BJ (cell line): ENCODE measurements at regions of chr11 and their contacts with region 1.

Region 1: DNA sequence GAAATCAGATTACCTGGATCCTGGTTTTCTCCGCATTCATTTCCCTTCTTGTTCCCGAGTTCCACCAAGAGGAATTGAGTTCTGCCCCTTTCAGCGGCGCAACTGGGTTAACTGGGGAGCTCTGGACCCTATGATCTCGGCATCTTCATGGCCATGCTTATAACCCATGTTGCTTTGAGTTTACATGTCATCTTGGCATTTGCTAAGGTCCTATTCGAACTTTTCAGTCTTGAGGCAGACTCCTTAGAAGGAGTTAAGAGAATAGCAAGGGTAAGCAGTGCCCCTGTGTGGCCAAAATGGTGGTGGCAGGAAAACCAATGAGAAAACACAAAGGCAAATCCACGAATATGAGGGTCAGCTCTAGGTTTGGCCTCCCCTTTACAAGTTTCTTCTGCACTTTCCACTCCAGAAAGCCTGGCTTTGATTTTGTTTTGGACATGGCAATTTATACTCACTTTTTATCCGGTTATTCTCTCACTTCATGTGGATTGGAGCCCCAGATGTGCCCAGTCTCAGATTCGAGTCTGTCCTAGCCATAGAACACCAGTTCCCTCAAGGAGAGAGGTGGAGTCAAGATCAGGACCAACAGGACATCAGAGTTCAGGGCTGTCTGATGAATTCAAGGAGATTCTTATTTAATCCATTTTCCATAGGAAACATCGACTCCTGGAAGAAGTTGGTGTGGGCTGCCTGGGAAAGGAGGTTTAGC is 55.3 kb upstream of the FBXO3 start:
- DNase-seq: peak; percentile 11
- H3K4me3 ChIP-seq: peak overlapping the region; percentile 31
- H3K27me3 ChIP-seq: peaks cover 19% of the 10 kb centered on the region; the same call in 1 of the 2 replicates
- CTCF ChIP-seq: peak; percentile 86

Region 2: GRCh38 chr11:33716236-33716635 is 113.4 kb before region 1 on chr11:
- CTCF ChIA-PET with region 1: interaction called, 11 read pairs
- POLR2A ChIA-PET with region 1: no interaction called
- DNase-seq: no peak
- H3K4me3 ChIP-seq: no peak overlapping the region
- H3K27me3 ChIP-seq: no peaks in the 10 kb centered on the region
- CTCF ChIP-seq: peak; percentile 39

Region 3: GRCh38 chr11:33819278-33819677 is 10.3 kb before region 1 on chr11:
- CTCF ChIA-PET with region 1: interaction called, 40 read pairs
- POLR2A ChIA-PET with region 1: no interaction called
- DNase-seq: no peak
- H3K4me3 ChIP-seq: no peak overlapping the region
- H3K27me3 ChIP-seq: peaks cover 40% of the 10 kb centered on the region
- CTCF ChIP-seq: no peak

Region 4: GRCh38 chr11:33842236-33842915 is 12.8 kb after region 1 on chr11:
- CTCF ChIA-PET with region 1: interaction called, 13 read pairs
- POLR2A ChIA-PET with region 1: interaction called, 4 read pairs
- DNase-seq: no peak
- H3K4me3 ChIP-seq: no peak overlapping the region
- H3K27me3 ChIP-seq: peaks cover 16% of the 10 kb centered on the region
- CTCF ChIP-seq: no peak

Region 5: GRCh38 chr11:34274723-34275401 is 445.3 kb after region 1 on chr11:
- CTCF ChIA-PET with region 1: no interaction called
- POLR2A ChIA-PET with region 1: no interaction called
- DNase-seq: peak; percentile 83
- H3K4me3 ChIP-seq: no peak overlapping the region
- H3K27me3 ChIP-seq: no peaks in the 10 kb centered on the region
- CTCF ChIP-seq: no peak